SK-N-SH (cell line): ENCODE measurements at regions of chr3 and their contacts with region 1.

Region 1: DNA sequence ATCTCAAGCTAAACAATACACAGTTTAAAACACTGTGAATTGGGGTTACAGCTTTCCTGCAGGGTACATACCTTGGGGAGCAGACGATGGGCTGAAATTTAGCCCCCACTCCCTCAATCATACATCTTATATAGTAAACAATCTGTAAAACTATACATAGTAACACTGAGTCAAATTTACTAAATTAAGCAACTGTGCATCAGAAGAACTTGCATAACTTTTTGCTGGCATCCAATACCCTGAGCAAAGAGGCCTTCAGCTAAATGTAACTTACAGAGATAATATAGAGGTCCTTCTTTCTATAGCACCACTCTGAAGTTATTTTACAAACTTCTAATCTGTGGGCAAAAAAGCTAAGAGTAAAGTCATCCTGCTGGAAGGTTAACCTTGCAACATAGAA is 603.6 kb upstream of the TGFBR2 start:
- DNase-seq: no peak
- H3K4me3 ChIP-seq: no peak overlapping the region
- H3K27ac ChIP-seq: no peak overlapping the region
- H3K4me1 ChIP-seq: peaks cover 5 to 6% of the 10 kb centered on the region in 2 experiments; a peak in 3 of 4 replicates
- H3K27me3 ChIP-seq: no peaks in the 10 kb centered on the region
- CTCF ChIP-seq: no peak
- EP300 ChIP-seq: no peak
- RAD21 ChIP-seq: no peak

Region 2: DNA sequence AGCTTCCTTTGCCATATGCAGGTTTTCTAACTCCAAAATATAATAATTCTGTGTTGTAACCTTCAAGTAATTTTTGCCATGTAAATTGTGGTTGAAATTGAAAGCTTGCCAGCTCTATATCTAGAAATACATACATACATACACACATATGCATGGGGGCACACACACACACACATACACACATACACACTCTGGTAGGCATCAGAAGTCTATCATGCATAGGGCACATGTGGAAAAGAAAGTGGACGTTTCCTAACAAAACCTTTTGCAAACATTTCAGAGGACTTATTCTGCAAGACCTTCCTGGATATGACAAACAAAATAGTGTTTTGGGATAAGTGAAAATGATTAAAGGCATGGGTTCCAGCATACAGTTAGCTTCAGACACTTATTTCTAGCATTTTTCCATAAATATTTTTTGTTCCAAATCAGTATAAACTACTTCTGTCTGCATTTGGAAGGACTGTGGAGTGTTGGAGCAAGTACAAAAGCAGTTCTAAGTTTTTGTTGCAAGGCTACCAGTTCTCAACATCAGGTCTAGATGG is 143.0 kb before region 1 on chr3:
- CTCF ChIA-PET with region 1: no interaction called
- POLR2A ChIA-PET with region 1: no interaction called
- DNase-seq: no peak
- H3K4me3 ChIP-seq: no peak overlapping the region
- H3K27ac ChIP-seq: no peak overlapping the region
- H3K4me1 ChIP-seq: peaks cover 0 to 2% of the 10 kb centered on the region in 2 experiments; a peak in 1 of 4 replicates
- H3K27me3 ChIP-seq: no peaks in the 10 kb centered on the region
- CTCF ChIP-seq: no peak
- EP300 ChIP-seq: no peak
- RAD21 ChIP-seq: no peak

Region 3: DNA sequence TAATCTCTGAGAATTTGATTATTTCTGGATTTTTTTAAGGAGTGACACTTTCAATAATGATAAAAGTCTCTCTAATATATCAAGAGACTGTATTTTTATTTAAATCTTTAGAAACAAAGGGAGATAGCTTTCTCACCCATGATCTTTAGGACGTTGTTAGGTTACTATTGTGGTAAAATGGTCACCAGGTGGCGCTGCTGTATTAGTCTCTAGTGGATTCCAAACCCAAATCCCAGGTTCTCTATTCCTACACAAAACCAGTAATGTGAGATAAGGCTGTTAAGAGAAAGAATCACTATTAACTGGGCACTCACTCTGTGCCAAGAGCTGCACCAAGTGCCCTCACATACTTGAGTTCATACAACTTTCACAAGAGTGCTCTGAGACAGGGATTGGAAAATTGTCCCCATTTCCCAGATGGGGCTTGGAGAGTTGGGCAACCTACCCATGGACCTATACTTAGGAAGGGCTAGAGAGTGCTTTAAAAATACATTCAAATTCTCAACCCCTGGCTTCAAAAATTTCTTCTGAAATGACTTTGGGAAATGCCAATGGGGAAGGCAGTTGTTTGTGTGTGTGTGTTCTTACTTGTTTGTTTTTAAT is 10.2 kb after region 1 on chr3:
- CTCF ChIA-PET with region 1: interaction called, 10 read pairs
- POLR2A ChIA-PET with region 1: no interaction called
- DNase-seq: peak; percentile 41
- H3K4me3 ChIP-seq: no peak overlapping the region; a peak in 1 of 4 replicates
- H3K27ac ChIP-seq: no peak overlapping the region
- H3K4me1 ChIP-seq: peaks cover 0 to 2% of the 10 kb centered on the region in 2 experiments; a peak in 2 of 4 replicates
- H3K27me3 ChIP-seq: no peaks in the 10 kb centered on the region
- CTCF ChIP-seq: peak; percentile 80
- EP300 ChIP-seq: no peak
- RAD21 ChIP-seq: peak; percentile 73